Pancreas (tissue), 10 donors: ENCODE measurements at regions of chr17 and their contacts with region 1.

Region 1: GRCh38 chr17:49556223-49556971 is 19.3 kb upstream of the NXPH3 start:
- DNase-seq: peak; percentile 48 to 96 (median 81)
- ATAC-seq: peak; percentile 92 to 97 (median 94)
- H3K4me3 ChIP-seq: peak overlapping the region in 1 of 4 donors; percentile 20
- H3K27ac ChIP-seq: no peak overlapping the region
- H3K4me1 ChIP-seq: no peaks in the 10 kb centered on the region
- H3K27me3 ChIP-seq: no peaks in the 10 kb centered on the region
- CTCF ChIP-seq: peak; percentile 95 to 99 (median 98)

Region 2: GRCh38 chr17:49327835-49328784 is 228.3 kb before region 1 on chr17:
- intact Hi-C with region 1: loop called in 1 of 3 experiments (anchors 10 kb)
- DNase-seq: no peak
- ATAC-seq: peak in 1 of 4 donors; percentile 40
- H3K4me3 ChIP-seq: no peak overlapping the region
- H3K27ac ChIP-seq: no peak overlapping the region
- H3K4me1 ChIP-seq: no peaks in the 10 kb centered on the region
- H3K27me3 ChIP-seq: no peaks in the 10 kb centered on the region
- CTCF ChIP-seq: no peak

Region 3: GRCh38 chr17:49407981-49408501 is 148.4 kb before region 1 on chr17:
- intact Hi-C with region 1: loop called in 1 of 3 experiments (anchors 5 kb)
- DNase-seq: peak; percentile 82 to 94 (median 90)
- ATAC-seq: peak; percentile 92 to 99 (median 97)
- H3K4me3 ChIP-seq: no peak overlapping the region
- H3K27ac ChIP-seq: peak overlapping the region in 2 of 4 donors; percentile 7 to 37
- H3K4me1 ChIP-seq: peaks cover 0 to 6% (median 0%) of the 10 kb centered on the region in 3 donors
- H3K27me3 ChIP-seq: no peaks in the 10 kb centered on the region
- CTCF ChIP-seq: peak; percentile 55 to 63 (median 62)

Region 4: DNA sequence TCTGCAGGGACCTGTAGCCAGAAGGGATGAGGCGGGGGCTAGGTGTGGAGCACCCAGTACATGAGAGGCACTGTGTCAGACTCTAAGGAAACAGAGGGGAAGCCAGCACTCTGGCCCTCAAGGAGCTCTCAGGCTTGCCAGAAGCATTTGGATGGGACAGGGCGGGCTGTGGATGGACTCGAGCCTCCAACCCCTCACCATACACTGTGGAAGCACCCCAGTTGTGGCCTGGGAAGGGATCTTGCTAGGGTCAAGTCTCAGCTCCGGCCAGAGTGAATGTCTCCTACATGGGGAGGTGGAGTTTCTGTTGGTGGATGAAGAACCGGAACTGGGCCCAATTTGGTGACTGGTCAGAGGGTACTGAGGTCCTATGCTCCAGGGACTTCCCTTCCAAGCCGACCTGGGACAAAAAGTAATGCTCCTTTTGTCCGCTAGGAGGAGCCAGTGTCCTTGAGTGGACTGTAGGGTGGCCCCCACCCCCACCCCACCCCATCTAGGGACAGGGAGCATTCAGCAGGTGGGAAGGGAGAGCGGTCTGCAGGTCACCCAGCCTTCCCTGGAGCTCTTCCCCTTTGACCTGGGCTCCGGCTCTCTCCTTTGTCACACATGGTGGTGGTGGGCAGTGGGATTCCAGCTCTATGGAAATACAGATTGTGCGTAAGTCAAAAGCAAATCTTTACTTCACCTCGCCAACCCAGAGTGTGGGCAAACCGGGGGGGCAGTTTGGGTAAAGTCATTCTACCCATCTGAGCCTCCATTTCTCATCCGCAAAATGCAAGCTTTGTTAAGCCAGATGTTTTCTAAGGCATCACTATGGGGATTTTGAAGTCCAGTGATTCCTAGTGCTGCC is 121.4 kb before region 1 on chr17:
- intact Hi-C with region 1: loop called in 2 of 3 experiments (anchors 5 to 10 kb)
- DNase-seq: peak in 2 of 6 donors; percentile 36 to 46
- ATAC-seq: peak in 3 of 4 donors; percentile 46 to 70 (median 69)
- H3K4me3 ChIP-seq: no peak overlapping the region
- H3K27ac ChIP-seq: no peak overlapping the region
- H3K4me1 ChIP-seq: no peaks in the 10 kb centered on the region
- H3K27me3 ChIP-seq: peaks cover 0 to 4% (median 0%) of the 10 kb centered on the region in 4 donors
- CTCF ChIP-seq: peak; percentile 46 to 70 (median 58)

Region 5: GRCh38 chr17:49494937-49495841 is 61.2 kb before region 1 on chr17 and contains the start of gene NGFR:
- intact Hi-C with region 1: loop called in 1 of 3 experiments (anchors 5 kb)
- DNase-seq: peak in 1 of 6 donors; percentile 69
- ATAC-seq: peak; percentile 23 to 82 (median 59)
- H3K4me3 ChIP-seq: peak within 1 kb of the TSS in 3 of 4 donors; percentile 11 to 47 (median 39)
- H3K27ac ChIP-seq: no peak within 1 kb of the TSS
- H3K4me1 ChIP-seq: peaks cover 0 to 20% (median 20%) of the 10 kb centered on the region in 3 donors
- H3K27me3 ChIP-seq: peaks cover 0 to 39% (median 2%) of the 10 kb centered on the region in 4 donors
- CTCF ChIP-seq: no peak
- total RNA-seq, gene NGFR: 1.1 to 19.0 (median 4.7) TPM